Dorsolateral prefrontal cortex (tissue), 120 donors: ENCODE measurements at regions of chr6 and their contacts with region 1.

Region 1: GRCh38 chr6:27078734-27079357 is 168.7 kb upstream of the PRSS16 start:
- DNase-seq: peak in 3 of 10 donors; percentile 23 to 57 (median 27)
- H3K4me3 ChIP-seq: peak overlapping the region in 55 of 59 donors; percentile 3 to 63 (median 44)
- H3K27ac ChIP-seq: peak overlapping the region in 1 of 59 donors; percentile 44
- H3K27me3 ChIP-seq: peaks cover 0 to 9% (median 0%) of the 10 kb centered on the region in 45 donors
- CTCF ChIP-seq: peak; percentile 36 to 88 (median 75)

Region 2: GRCh38 chr6:26607434-26608230 is 471.2 kb before region 1 on chr6:
- intact Hi-C with region 1: loop called (anchors 2 kb)
- DNase-seq: peak in 2 of 10 donors; percentile 46 to 60
- H3K4me3 ChIP-seq: peak overlapping the region in 34 of 59 donors; percentile 15 to 53 (median 28)
- H3K27ac ChIP-seq: no peak overlapping the region
- H3K27me3 ChIP-seq: peaks cover 0 to 8% (median 0%) of the 10 kb centered on the region in 45 donors
- CTCF ChIP-seq: peak; percentile 32 to 82 (median 66)

Region 3: GRCh38 chr6:27019651-27020552 is 58.9 kb before region 1 on chr6:
- intact Hi-C with region 1: loop called in 1 of 2 experiments (anchors 10 kb)
- DNase-seq: peak; percentile 41 to 91 (median 84)
- H3K4me3 ChIP-seq: peak overlapping the region; percentile 44 to 98 (median 79)
- H3K27ac ChIP-seq: peak overlapping the region; percentile 46 to 96 (median 88)
- H3K27me3 ChIP-seq: no peaks in the 10 kb centered on the region
- CTCF ChIP-seq: peak in 10 of 56 donors; percentile 10 to 29 (median 20)